ENCODE measurements at regions of chr6 and their contacts with region 1.

Region 1: GRCh38 chr6:109690737-109691621 is at the starts of genes AK9 and FIG4:
- DNase-seq: peak; percentile 72 to 88 (median 83)
- ATAC-seq: peak; percentile 98
- H3K4me3 ChIP-seq: peak within 1 kb of the TSS; percentile 98
- H3K4me3 Mint-ChIP-seq: peak within 1 kb of the TSS; percentile 91 to 100 (median 96)
- H3K27ac ChIP-seq: peak within 1 kb of the TSS; percentile 74
- H3K27ac Mint-ChIP-seq: peak within 1 kb of the TSS; percentile 92 to 99 (median 96)
- H3K4me1 ChIP-seq: peaks cover 12 to 13% of the 10 kb centered on the region in 2 donors
- H3K4me1 Mint-ChIP-seq: peaks cover 21 to 48% (median 34%) of the 10 kb centered on the region in 7 donors
- H3K27me3 ChIP-seq: no peaks in the 10 kb centered on the region
- H3K27me3 Mint-ChIP-seq: peaks cover 0 to 13% (median 0%) of the 10 kb centered on the region in 5 donors
- total RNA-seq, gene AK9: 5.8 to 19.5 (median 11.5) TPM
- total RNA-seq, gene FIG4: 6.8 to 16.5 (median 13.0) TPM

Region 2: GRCh38 chr6:108074359-108075144 is 1616.4 kb before region 1 on chr6 and contains the start of gene OSTM1:
- CTCF ChIA-PET with region 1: no interaction called
- POLR2A ChIA-PET with region 1: no interaction called
- intact Hi-C with region 1: loop called (anchors 1 to 5 kb)
- DNase-seq: peak; percentile 88 to 98 (median 94)
- ATAC-seq: peak; percentile 99
- H3K4me3 ChIP-seq: peak within 1 kb of the TSS; percentile 99
- H3K4me3 Mint-ChIP-seq: peak within 1 kb of the TSS; percentile 84 to 94 (median 90)
- H3K27ac ChIP-seq: peak within 1 kb of the TSS; percentile 89
- H3K27ac Mint-ChIP-seq: peak within 1 kb of the TSS; percentile 81 to 98 (median 91)
- H3K4me1 ChIP-seq: peaks cover 18% of the 10 kb centered on the region in 2 donors
- H3K4me1 Mint-ChIP-seq: peaks cover 11 to 35% (median 23%) of the 10 kb centered on the region in 7 donors
- H3K27me3 ChIP-seq: no peaks in the 10 kb centered on the region
- H3K27me3 Mint-ChIP-seq: peaks cover 0 to 25% (median 4%) of the 10 kb centered on the region in 5 donors
- total RNA-seq, gene OSTM1: 25.0 to 48.9 (median 36.7) TPM

Region 3: GRCh38 chr6:109187399-109188114 is 503.4 kb before region 1 on chr6:
- CTCF ChIA-PET with region 1: interaction called, 3 read pairs
- POLR2A ChIA-PET with region 1: no interaction called
- intact Hi-C with region 1: loop called (anchors 1 to 5 kb)
- DNase-seq: peak; percentile 19 to 68 (median 56)
- ATAC-seq: peak; percentile 91
- H3K4me3 ChIP-seq: no peak overlapping the region
- H3K4me3 Mint-ChIP-seq: no peak overlapping the region
- H3K27ac ChIP-seq: no peak overlapping the region
- H3K27ac Mint-ChIP-seq: no peak overlapping the region
- H3K4me1 ChIP-seq: no peaks in the 10 kb centered on the region
- H3K4me1 Mint-ChIP-seq: peaks cover 0 to 4% (median 0%) of the 10 kb centered on the region in 7 donors
- H3K27me3 ChIP-seq: peaks cover 0 to 3% of the 10 kb centered on the region in 2 donors
- H3K27me3 Mint-ChIP-seq: peaks cover 1 to 45% (median 8%) of the 10 kb centered on the region in 5 donors

Region 4: DNA sequence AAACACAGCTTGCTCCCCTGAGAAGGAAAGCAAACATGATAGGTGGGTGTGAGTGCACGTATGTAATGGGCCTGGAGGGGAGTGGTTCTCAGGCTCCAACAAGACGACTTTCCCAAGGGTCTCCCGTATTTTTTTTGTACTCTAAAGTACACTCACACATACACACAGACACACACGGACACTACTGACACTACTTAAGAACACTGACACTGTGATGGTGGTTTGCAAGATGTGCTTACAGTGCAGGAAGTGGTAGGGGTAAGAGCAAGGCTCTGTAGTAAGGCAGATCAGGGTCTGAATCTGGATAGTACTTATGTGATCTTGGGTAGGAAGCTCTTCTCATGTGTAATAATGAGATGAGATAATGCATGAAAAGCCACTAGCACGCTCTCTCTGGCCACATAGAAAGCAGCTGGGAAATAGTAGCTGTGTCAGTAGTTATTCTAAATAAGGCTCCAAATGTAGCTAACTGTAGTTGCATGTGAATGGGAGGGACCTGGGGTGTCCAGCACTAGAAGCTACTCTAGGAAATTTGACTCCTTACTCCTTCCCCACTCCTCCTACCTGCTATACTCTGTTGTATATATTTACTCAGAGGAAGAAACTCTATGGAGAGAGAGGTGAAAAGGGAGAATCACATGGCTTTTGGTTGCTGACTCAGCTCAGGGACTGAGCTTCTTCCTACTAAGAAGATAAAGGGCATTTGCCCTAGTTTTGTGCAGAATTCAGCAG is 199.6 kb before region 1 on chr6:
- CTCF ChIA-PET with region 1: no interaction called
- POLR2A ChIA-PET with region 1: no interaction called
- intact Hi-C with region 1: loop called in 1 of 2 experiments (anchors 2 kb)
- DNase-seq: peak in 6 of 9 donors; percentile 23 to 57 (median 39)
- ATAC-seq: peak; percentile 92
- H3K4me3 ChIP-seq: no peak overlapping the region
- H3K4me3 Mint-ChIP-seq: peak overlapping the region in 8 of 10 donors; percentile 4 to 70 (median 42)
- H3K27ac ChIP-seq: peak overlapping the region; percentile 1
- H3K27ac Mint-ChIP-seq: peak overlapping the region; percentile 19 to 84 (median 60)
- H3K4me1 ChIP-seq: peaks cover 15 to 17% of the 10 kb centered on the region in 2 donors
- H3K4me1 Mint-ChIP-seq: peaks cover 12 to 36% (median 25%) of the 10 kb centered on the region in 7 donors
- H3K27me3 ChIP-seq: no peaks in the 10 kb centered on the region
- H3K27me3 Mint-ChIP-seq: peaks cover 0 to 5% (median 0%) of the 10 kb centered on the region in 5 donors

Region 5: GRCh38 chr6:110039364-110039980 is 348.5 kb after region 1 on chr6:
- CTCF ChIA-PET with region 1: interaction called, 12 read pairs
- POLR2A ChIA-PET with region 1: interaction called, 5 read pairs
- intact Hi-C with region 1: loop called (anchors 1 to 5 kb)
- DNase-seq: peak; percentile 66 to 81 (median 78)
- ATAC-seq: peak; percentile 92
- H3K4me3 ChIP-seq: peak overlapping the region; percentile 54
- H3K4me3 Mint-ChIP-seq: peak overlapping the region; percentile 89 to 97 (median 90)
- H3K27ac ChIP-seq: peak overlapping the region; percentile 53
- H3K27ac Mint-ChIP-seq: peak overlapping the region; percentile 80 to 98 (median 92)
- H3K4me1 ChIP-seq: peaks cover 0 to 14% of the 10 kb centered on the region in 2 donors
- H3K4me1 Mint-ChIP-seq: peaks cover 9 to 17% (median 13%) of the 10 kb centered on the region in 7 donors
- H3K27me3 ChIP-seq: no peaks in the 10 kb centered on the region
- H3K27me3 Mint-ChIP-seq: no peaks in the 10 kb centered on the region

Region 6: GRCh38 chr6:110958329-110959192 is 1267.6 kb after region 1 on chr6 and contains the start of gene GTF3C6:
- CTCF ChIA-PET with region 1: no interaction called
- POLR2A ChIA-PET with region 1: no interaction called
- intact Hi-C with region 1: loop called in 1 of 2 experiments (anchors 2 kb)
- DNase-seq: peak; percentile 85 to 94 (median 91)
- ATAC-seq: peak; percentile 99
- H3K4me3 ChIP-seq: peak within 1 kb of the TSS; percentile 86
- H3K4me3 Mint-ChIP-seq: peak within 1 kb of the TSS; percentile 95 to 99 (median 96)
- H3K27ac ChIP-seq: peak within 1 kb of the TSS; percentile 81
- H3K27ac Mint-ChIP-seq: peak within 1 kb of the TSS; percentile 96 to 99 (median 97)
- H3K4me1 ChIP-seq: peaks cover 4% of the 10 kb centered on the region in 2 donors
- H3K4me1 Mint-ChIP-seq: peaks cover 13 to 27% (median 20%) of the 10 kb centered on the region in 7 donors
- H3K27me3 ChIP-seq: no peaks in the 10 kb centered on the region
- H3K27me3 Mint-ChIP-seq: peaks cover 0 to 7% (median 0%) of the 10 kb centered on the region in 5 donors
- total RNA-seq, gene GTF3C6: 18.1 to 100 (median 29.9) TPM

Measured in naive thymus-derived CD4-positive, alpha-beta T cell (primary cell).